Left ventricle myocardium superior (tissue), 1 donor: ENCODE measurements at regions of chr3 and their contacts with region 1.

Region 1: DNA sequence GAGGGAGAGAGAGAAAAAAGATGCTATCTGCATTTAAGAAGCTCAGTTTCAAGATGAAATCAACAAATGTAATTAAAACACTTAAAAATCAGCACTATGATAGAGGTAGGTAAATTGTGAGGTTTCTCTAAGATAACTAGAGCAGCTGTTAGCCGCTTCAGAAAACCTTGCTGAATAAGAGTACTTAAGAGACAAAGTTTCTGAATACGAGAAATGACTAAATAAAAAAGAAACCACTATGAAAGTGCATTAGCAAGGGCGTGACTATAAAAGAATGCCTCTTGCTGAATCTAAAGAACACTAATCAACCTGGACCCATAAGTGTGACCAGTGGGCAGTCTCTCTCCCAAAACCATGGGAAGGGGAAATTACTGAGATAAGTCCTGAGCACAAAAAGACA is 41.8 kb downstream of the IQCB1 start:
- DNase-seq: no peak
- ATAC-seq: no peak

Region 2: GRCh38 chr3:121768452-121768851 is 24.6 kb before region 1 on chr3:
- intact Hi-C with region 1: loop called (anchors 2 kb)
- DNase-seq: no peak
- ATAC-seq: no peak